HAP-1 (cell line): ENCODE measurements at regions of chr6 and their contacts with region 1.

Region 1: DNA sequence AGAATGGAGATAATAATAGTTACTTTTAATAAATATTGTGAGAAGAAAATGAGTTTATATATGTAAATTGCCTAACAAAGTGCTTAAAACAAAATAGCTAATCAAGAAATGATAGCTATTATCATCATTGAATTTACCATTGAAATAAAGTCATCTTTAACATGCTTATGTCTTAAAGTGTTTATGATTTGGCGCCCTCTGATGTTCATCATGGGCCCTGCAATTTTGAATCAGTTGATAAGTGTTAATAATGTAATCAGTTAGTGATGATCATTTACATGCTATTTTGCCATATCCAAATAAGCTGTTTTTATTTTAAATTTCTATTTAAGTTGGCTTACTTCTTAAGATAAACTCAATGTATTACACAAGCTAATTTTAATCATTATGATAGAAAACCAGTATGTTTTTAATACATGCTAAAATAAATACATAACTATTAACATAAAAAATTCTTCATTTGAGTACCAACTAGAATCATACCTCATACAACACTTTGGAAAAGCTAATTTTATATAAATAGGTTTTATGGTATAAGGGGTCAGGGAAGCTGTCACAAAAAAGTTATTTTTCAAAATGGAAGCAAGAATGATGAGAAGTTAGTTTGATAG is 39.2 kb upstream of the TPD52L1 start:
- DNase-seq: peak; percentile 32 to 68
- H3K4me3 ChIP-seq: no peak overlapping the region
- H3K4me1 ChIP-seq: no peaks in the 10 kb centered on the region
- H3K27me3 ChIP-seq: peaks cover 6% of the 10 kb centered on the region

Region 2: DNA sequence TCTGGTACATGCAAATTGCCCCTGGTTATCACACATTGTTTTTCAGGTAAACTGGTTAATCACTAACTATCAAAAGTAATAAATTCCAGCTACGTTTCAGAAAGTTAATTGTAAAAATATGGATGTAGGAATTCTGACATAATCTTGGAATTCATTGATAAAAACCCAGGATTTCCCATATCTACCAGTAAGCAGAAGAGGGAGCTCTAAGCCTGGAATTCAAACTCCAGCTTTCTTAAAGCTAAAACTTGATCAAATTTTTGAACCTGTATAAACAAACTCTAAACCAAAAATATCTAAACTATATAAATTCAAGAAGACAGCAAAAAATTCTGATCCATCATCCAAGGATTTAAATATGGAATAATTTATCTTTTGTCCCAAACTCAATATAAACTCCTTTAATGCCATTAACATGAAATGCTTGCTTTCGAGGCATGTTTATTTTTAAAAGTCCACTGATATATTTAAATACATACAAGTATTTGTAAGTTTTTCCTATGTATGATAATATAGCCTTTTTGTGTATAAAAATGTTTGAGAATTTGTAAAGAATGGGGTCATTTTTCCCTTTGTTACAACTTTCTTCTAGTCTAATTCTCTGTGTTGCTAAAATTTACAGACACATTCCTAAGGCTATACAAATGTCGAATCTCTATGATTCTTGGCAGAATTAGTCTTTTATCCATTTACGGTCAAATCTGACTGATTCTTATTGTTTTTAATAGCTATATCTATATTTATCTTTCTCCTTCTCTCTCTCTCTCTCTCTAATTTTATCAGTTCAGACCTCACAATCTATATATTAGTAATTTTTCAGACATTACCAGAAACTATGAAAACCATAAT is 243.5 kb before region 1 on chr6:
- in situ Hi-C with region 1: loop called (anchors 10 kb)
- DNase-seq: peak; percentile 13 to 59
- H3K4me3 ChIP-seq: no peak overlapping the region
- H3K4me1 ChIP-seq: no peaks in the 10 kb centered on the region
- H3K27me3 ChIP-seq: peaks cover 37% of the 10 kb centered on the region

Region 3: DNA sequence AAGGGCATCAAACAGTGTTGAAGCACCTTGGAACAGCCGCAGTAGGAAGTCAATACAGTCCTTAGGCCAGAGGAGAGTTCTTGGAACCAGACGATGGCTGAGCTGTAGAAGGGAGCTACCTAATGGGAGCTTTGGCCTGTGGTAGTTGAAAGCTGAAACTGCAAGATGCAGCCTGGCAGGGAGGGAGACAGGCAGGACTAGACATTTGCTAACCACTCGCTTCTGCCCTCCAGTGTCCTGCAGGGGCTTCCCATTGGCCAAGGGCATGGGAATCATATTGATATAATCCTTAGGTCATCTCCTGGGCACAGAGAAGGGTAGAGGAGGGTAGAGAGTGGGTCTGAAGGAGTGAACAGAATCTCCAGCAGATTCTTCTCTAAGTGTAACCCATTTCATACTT is 99.6 kb after region 1 on chr6:
- in situ Hi-C with region 1: no loop called
- DNase-seq: no peak
- H3K4me3 ChIP-seq: no peak overlapping the region
- H3K4me1 ChIP-seq: no peaks in the 10 kb centered on the region
- H3K27me3 ChIP-seq: no peaks in the 10 kb centered on the region; the same call in 1 of the 2 replicates